PC-3 (cell line): ENCODE measurements at regions of chr14 and their contacts with region 1.

Region 1: DNA sequence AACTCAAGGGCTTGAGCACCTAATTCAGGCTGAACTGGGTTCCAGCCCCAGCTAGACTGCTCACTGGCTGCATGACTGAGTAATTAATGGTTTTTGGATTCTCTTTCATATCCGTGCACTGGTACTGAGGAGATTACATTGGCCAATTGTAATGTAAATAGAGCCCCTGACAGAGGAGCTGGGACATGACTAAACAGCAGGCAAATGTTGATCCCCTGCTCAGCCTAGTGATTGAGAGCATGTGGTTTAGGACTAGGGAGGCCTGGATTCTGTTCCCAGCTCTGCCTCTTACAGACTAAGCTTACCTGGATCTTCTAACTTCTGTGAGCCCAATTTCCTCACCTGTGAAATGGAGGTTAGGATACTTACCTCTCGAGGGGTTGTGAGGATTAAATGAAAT is 204.3 kb downstream of the ESR2 start:
- DNase-seq: no peak
- ATAC-seq: no peak
- H3K4me3 ChIP-seq: no peak overlapping the region
- H3K27ac ChIP-seq: no peak overlapping the region
- H3K4me1 ChIP-seq: peaks cover 15% of the 10 kb centered on the region
- H3K27me3 ChIP-seq: no peaks in the 10 kb centered on the region
- CTCF ChIP-seq: no peak

Region 2: DNA sequence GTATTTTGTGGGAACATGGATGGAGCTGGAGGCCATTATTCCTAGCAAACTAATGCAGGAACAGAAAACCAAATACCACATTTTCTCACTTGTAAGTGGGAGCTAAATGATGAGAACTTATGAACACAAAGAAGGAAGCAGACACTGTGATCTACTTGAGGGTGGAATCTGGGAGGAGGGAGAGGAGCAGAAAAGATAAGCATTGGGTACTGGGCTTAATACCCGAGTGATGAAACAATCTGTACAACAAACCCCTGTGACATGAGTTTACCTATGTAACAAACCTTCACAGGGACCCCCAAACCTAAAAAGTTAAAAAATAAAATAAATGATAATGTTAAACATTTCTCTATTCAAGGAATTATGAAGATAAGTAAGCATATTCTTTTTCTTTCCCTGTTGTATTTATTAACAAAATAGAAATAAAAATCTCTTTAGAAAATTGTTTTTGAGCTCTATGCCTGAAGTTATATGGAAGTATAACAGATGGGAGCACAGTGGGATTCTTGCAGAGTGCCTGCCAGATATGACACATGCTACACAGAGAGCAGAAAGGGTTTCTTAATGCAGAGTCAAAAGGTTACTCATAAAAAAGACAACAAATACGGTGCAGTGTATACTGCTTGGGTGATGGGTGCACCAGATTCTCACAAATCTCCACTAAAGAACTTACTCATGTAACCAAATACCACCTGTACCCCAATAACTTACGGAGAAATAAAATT is 289.1 kb before region 1 on chr14:
- CTCF ChIA-PET with region 1: no interaction called
- POLR2A ChIA-PET with region 1: no interaction called
- intact Hi-C with region 1: no loop called
- DNase-seq: peak; percentile 19
- ATAC-seq: peak; percentile 33; the same call in 1 of the 2 replicates
- H3K4me3 ChIP-seq: no peak overlapping the region
- H3K27ac ChIP-seq: no peak overlapping the region
- H3K4me1 ChIP-seq: no peaks in the 10 kb centered on the region
- H3K27me3 ChIP-seq: no peaks in the 10 kb centered on the region
- CTCF ChIP-seq: no peak

Region 3: GRCh38 chr14:63910583-63911363 is 179.1 kb before region 1 on chr14:
- CTCF ChIA-PET with region 1: no interaction called
- POLR2A ChIA-PET with region 1: no interaction called
- intact Hi-C with region 1: no loop called
- DNase-seq: no peak
- ATAC-seq: no peak
- H3K4me3 ChIP-seq: no peak overlapping the region
- H3K27ac ChIP-seq: no peak overlapping the region
- H3K4me1 ChIP-seq: no peaks in the 10 kb centered on the region
- H3K27me3 ChIP-seq: no peaks in the 10 kb centered on the region
- CTCF ChIP-seq: no peak

Region 4: DNA sequence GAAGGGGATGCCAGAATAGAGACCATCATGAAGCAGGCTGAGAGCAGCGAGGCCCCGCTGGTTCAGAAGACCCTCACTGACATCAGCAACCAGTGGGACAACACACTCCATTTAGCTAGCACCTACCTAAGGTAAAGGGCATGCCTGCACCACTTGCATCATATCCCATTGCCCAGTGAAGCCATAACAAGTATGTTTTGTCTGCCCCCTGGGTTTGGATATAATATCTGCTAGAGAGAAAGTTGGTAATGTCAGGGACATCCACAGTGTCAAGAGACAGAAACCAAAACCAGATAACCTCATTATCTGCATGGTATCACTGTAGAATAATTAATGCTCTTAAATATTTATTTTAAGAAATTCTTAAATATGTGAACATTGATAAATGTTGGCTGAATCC is 63.3 kb before region 1 on chr14:
- CTCF ChIA-PET with region 1: no interaction called
- POLR2A ChIA-PET with region 1: no interaction called
- intact Hi-C with region 1: no loop called
- DNase-seq: no peak
- ATAC-seq: 0 out of 2 replicates have a peak, but pooled peaks have one; percentile 31
- H3K4me3 ChIP-seq: no peak overlapping the region
- H3K27ac ChIP-seq: no peak overlapping the region
- H3K4me1 ChIP-seq: no peaks in the 10 kb centered on the region
- H3K27me3 ChIP-seq: no peaks in the 10 kb centered on the region
- CTCF ChIP-seq: no peak

Region 5: GRCh38 chr14:64040044-64040443 is 49.9 kb before region 1 on chr14:
- CTCF ChIA-PET with region 1: no interaction called
- POLR2A ChIA-PET with region 1: no interaction called
- intact Hi-C with region 1: loop called (anchors 5 kb)
- DNase-seq: peak; percentile 37
- ATAC-seq: 0 out of 2 replicates have a peak, but pooled peaks have one; percentile 19
- H3K4me3 ChIP-seq: no peak overlapping the region
- H3K27ac ChIP-seq: no peak overlapping the region
- H3K4me1 ChIP-seq: no peaks in the 10 kb centered on the region
- H3K27me3 ChIP-seq: no peaks in the 10 kb centered on the region
- CTCF ChIP-seq: peak; percentile 76

Region 6: GRCh38 chr14:64074961-64075612 is 14.8 kb before region 1 on chr14:
- CTCF ChIA-PET with region 1: no interaction called
- POLR2A ChIA-PET with region 1: no interaction called
- intact Hi-C with region 1: loop called (anchors 1 kb)
- DNase-seq: peak; percentile 90
- ATAC-seq: peak; percentile 98
- H3K4me3 ChIP-seq: no peak overlapping the region
- H3K27ac ChIP-seq: peak overlapping the region; percentile 70
- H3K4me1 ChIP-seq: peaks cover 19% of the 10 kb centered on the region
- H3K27me3 ChIP-seq: no peaks in the 10 kb centered on the region
- CTCF ChIP-seq: no peak

Region 7: DNA sequence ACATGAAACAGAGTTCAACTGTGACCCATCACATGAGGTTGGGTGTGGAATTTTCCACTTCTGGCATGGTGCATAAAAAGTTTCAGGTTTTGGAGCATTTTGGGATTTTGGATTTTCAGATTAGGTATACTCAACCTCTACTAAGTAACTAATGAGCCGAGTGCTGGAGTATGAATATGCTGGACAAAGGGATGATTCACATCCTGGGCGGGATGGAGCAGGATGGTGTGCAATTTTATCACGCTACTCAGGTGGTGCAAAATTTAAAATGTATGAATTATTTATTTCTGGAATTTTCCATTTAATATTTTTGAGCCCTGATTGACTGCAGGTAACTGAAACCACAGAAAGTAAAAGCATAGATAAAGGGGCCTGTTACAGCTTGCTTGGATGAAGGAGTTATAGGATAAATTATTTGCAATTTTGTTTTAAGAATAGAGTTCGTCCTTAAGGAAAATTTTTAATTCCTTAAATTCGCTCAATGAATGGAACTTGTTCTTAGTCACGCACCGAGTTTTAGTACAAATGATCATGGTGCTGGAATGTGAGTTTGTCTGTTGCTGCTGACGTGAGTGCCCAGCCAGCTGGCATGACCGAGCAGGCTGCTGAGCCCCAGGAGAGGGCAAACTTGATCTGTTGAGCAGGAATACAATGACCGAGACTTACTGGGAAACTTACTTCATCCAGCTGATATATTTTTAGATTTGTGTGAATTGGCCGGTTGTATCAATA is 27.9 kb after region 1 on chr14:
- CTCF ChIA-PET with region 1: no interaction called
- POLR2A ChIA-PET with region 1: no interaction called
- intact Hi-C with region 1: loop called (anchors 2 kb)
- DNase-seq: peak; percentile 69
- ATAC-seq: peak; percentile 99
- H3K4me3 ChIP-seq: no peak overlapping the region
- H3K27ac ChIP-seq: peak overlapping the region; percentile 75
- H3K4me1 ChIP-seq: peaks cover 14% of the 10 kb centered on the region
- H3K27me3 ChIP-seq: no peaks in the 10 kb centered on the region
- CTCF ChIP-seq: 0 out of 2 replicates have a peak, but pooled peaks have one; percentile 16

Region 8: GRCh38 chr14:64708148-64709004 is 618.5 kb after region 1 on chr14:
- CTCF ChIA-PET with region 1: no interaction called
- POLR2A ChIA-PET with region 1: no interaction called
- intact Hi-C with region 1: no loop called
- DNase-seq: peak; percentile 80
- ATAC-seq: peak; percentile 8
- H3K4me3 ChIP-seq: peak overlapping the region; percentile 24; the same call in 1 of the 2 replicates
- H3K27ac ChIP-seq: peak overlapping the region; percentile 74
- H3K4me1 ChIP-seq: peaks cover 47% of the 10 kb centered on the region
- H3K27me3 ChIP-seq: no peaks in the 10 kb centered on the region
- CTCF ChIP-seq: 0 out of 2 replicates have a peak, but pooled peaks have one; percentile 8